Vagina (tissue), 2 donors: ENCODE measurements at regions of chr19 and their contacts with region 1.

Region 1: GRCh38 chr19:7098701-7099596 is 29.4 kb downstream of the ZNF557 start:
- DNase-seq: peak in 1 of 2 donors; percentile 91
- H3K4me3 ChIP-seq: peak overlapping the region; percentile 64 to 68
- H3K27ac ChIP-seq: peak overlapping the region; percentile 96
- H3K4me1 ChIP-seq: no peaks in the 10 kb centered on the region
- H3K27me3 ChIP-seq: no peaks in the 10 kb centered on the region
- CTCF ChIP-seq: no peak
- POLR2A ChIP-seq: no peak

Region 2: GRCh38 chr19:7680606-7681339 is 581.8 kb after region 1 on chr19 and contains the start of gene TRAPPC5:
- intact Hi-C with region 1: loop called (anchors 10 kb)
- DNase-seq: no peak
- H3K4me3 ChIP-seq: peak within 1 kb of the TSS; percentile 89 to 100
- H3K27ac ChIP-seq: peak within 1 kb of the TSS; percentile 91
- H3K4me1 ChIP-seq: peaks cover 19% of the 10 kb centered on the region
- H3K27me3 ChIP-seq: no peaks in the 10 kb centered on the region
- CTCF ChIP-seq: peak; percentile 79 to 98 (median 93)
- POLR2A ChIP-seq: peak in 1 of 2 donors; percentile 38
- total RNA-seq, gene TRAPPC5: 87.2 TPM